MCF 10A (cell line): ENCODE measurements at regions of chr7 and their contacts with region 1.

Region 1: DNA sequence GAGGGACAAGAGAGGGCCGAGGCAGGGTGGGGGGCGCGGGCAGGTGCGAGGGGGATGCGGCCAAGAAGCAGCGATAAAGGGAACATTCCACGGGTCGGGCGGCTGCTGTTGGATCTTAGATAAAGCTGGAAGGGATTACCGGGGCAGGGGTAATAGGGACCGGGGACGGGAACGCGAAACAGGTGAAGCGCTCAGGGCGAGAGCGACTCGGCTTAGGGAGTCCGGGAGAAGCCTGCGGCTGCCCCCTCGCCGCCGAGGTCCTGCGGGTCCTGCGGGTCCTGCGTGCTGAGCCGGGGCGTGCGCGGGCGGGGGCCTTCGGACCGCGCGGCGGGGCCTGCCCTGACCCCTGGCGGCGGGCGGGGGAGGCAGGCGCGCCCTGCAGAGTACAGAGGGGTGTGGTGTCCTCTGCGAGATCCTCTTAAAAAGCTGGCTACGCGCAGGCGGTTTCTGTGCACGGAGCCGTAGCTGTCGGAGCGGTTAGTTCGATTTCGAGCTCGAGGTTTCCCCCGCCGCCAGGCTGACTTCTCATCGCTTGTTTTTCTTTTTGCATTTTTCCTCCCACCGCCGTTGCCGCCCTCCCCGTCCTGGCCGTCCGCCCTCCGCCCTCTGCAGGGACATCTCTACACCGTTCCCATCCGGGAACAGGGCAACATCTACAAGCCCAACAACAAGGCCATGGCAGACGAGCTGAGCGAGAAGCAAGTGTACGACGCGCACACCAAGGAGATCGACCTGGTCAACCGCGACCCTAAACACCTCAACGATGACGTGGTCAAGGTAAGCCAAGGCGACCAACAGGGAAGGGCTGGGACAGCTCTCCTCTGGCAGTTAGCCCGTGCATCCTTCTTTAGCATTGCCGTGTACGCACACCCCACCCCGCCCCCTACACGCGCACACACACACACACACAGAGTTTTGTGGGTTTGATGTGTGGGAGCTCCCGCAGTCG is 1.4 kb downstream of the CAV1 start:
- DNase-seq: peak; percentile 85
- H3K4me3 Mint-ChIP-seq: peak overlapping the region; percentile 99
- H3K27ac Mint-ChIP-seq: peak overlapping the region; percentile 90
- H3K4me1 Mint-ChIP-seq: peaks cover 39% of the 10 kb centered on the region
- H3K27me3 Mint-ChIP-seq: no peaks in the 10 kb centered on the region
- CTCF ChIP-seq: peak; percentile 81

Region 2: DNA sequence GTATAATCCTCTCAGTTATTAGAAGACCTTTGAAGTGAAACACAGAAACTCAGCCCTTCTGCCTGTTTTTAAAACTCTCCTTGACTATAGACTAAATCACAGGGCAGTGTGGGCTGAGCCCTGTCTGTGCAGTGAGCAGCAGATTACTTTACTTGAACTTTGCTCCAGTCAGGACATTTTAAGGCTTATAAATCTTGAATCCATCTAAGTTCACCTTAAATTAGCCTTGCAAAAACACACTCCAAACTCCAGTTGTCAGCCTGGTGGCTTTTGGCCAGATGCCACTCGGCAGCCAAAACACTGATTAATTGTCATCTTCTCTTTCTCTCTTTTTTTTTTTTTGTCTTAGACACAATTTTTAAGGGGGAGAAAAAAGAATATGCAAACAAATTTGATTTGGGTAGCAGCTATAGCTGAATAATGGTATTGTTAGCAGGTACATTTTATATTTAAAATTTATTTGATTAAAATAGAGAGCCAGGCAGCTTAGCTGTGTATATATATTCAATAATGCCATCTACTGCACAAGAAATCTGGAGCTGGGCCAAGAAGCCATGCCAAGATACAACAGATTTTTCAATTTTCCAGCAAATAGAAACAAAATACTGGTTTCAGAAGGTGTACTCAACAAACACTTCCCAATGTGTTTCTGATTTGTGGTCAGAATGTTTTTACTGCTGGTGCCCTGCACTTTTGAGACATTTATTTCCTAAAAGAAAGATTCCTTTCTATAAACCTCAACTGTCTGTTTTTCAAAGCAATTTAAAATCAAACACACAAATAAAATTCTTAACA is 743.3 kb before region 1 on chr7:
- CTCF ChIA-PET with region 1: no interaction called
- POLR2A ChIA-PET with region 1: no interaction called
- intact Hi-C with region 1: no loop called
- DNase-seq: no peak
- H3K4me3 Mint-ChIP-seq: no peak overlapping the region
- H3K27ac Mint-ChIP-seq: no peak overlapping the region
- H3K4me1 Mint-ChIP-seq: no peaks in the 10 kb centered on the region
- H3K27me3 Mint-ChIP-seq: peaks cover 74% of the 10 kb centered on the region
- CTCF ChIP-seq: no peak

Region 3: DNA sequence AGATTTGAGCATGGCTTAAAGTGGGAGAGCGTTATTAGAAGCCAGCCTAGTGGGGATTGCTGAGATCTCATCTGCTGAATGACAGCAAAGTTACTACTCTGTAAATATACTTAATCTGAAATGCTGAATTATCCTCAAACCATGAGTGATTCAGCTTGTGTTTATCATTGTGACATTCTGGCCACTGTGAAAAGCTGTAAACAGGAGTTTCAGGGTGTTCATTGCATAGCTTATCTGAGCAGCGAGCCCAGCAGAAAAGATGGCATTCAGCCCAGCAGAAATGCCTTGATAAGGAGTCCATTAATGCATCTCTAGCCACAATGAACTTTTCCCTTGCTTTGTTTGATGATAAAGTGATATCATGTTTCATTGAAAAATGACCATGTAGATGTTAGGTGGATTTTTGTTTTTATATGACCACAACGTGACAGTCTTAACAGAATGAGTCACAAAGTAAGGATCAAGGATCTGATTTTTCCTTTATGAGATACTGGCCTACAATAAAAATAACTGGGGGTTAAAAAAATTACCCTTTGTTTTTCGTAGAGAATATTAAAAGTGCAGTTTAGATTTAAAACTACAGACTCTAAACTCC is 308.0 kb before region 1 on chr7:
- CTCF ChIA-PET with region 1: interaction called, 3 read pairs
- POLR2A ChIA-PET with region 1: interaction called, 54 read pairs
- intact Hi-C with region 1: no loop called
- DNase-seq: peak; percentile 62
- H3K4me3 Mint-ChIP-seq: no peak overlapping the region
- H3K27ac Mint-ChIP-seq: peak overlapping the region; percentile 81
- H3K4me1 Mint-ChIP-seq: peaks cover 37% of the 10 kb centered on the region
- H3K27me3 Mint-ChIP-seq: no peaks in the 10 kb centered on the region
- CTCF ChIP-seq: no peak

Region 4: DNA sequence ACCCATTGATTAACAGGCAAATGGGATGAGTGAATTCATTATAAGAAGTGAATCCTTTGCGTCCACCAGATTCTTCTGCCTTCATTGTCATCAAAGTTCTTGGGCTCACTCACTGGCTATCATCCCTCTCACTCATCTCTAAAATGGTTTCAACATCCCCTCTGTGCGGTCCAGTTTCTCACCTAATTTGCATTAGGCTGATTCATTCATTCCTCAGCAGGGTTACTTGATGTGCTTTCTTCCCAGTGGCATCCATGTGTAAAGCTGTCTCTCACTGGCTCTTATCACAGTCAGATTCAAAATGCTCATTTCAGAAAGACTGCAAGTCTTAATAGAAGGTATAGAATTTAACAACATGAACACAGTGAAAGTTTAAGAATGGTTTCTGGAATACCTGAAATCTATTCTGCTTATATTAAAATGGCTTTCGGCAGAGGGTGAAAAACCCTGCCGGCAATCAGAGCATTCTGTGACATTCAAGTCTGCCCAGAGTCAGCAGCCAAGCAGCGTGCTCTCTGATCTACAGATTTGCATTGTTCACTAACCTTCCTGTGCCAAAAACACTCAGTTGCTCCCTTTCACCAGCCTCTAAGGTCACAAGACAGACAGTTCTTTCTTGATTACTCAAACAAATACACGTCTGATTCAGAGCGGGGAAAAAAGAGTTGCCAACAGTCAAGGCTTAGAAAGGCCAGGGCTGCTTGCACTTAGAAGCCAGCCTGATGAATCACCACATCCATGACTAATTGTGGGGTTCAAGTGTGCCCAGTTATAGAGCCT is 209.2 kb before region 1 on chr7:
- CTCF ChIA-PET with region 1: interaction called, 6 read pairs
- POLR2A ChIA-PET with region 1: interaction called, 25 read pairs
- intact Hi-C with region 1: loop called (anchors 1 kb)
- DNase-seq: peak; percentile 99
- H3K4me3 Mint-ChIP-seq: peak overlapping the region; percentile 42
- H3K27ac Mint-ChIP-seq: peak overlapping the region; percentile 88
- H3K4me1 Mint-ChIP-seq: peaks cover 17% of the 10 kb centered on the region
- H3K27me3 Mint-ChIP-seq: no peaks in the 10 kb centered on the region
- CTCF ChIP-seq: no peak

Region 5: GRCh38 chr7:116380025-116380424 is 146.2 kb before region 1 on chr7:
- CTCF ChIA-PET with region 1: no interaction called
- POLR2A ChIA-PET with region 1: no interaction called
- intact Hi-C with region 1: no loop called
- DNase-seq: no peak
- H3K4me3 Mint-ChIP-seq: no peak overlapping the region
- H3K27ac Mint-ChIP-seq: no peak overlapping the region
- H3K4me1 Mint-ChIP-seq: peaks cover under 1% of the 10 kb centered on the region
- H3K27me3 Mint-ChIP-seq: no peaks in the 10 kb centered on the region
- CTCF ChIP-seq: no peak

Region 6: GRCh38 chr7:116454377-116454776 is 71.8 kb before region 1 on chr7:
- CTCF ChIA-PET with region 1: no interaction called
- POLR2A ChIA-PET with region 1: no interaction called
- intact Hi-C with region 1: no loop called
- DNase-seq: no peak
- H3K4me3 Mint-ChIP-seq: no peak overlapping the region
- H3K27ac Mint-ChIP-seq: no peak overlapping the region
- H3K4me1 Mint-ChIP-seq: peaks cover 14% of the 10 kb centered on the region
- H3K27me3 Mint-ChIP-seq: no peaks in the 10 kb centered on the region
- CTCF ChIP-seq: no peak

Region 7: GRCh38 chr7:116499168-116500077 is 26.8 kb before region 1 on chr7 and contains the start of gene CAV2:
- CTCF ChIA-PET with region 1: interaction called, 37 read pairs
- POLR2A ChIA-PET with region 1: interaction called, 241 read pairs
- intact Hi-C with region 1: loop called (anchors 1 kb)
- DNase-seq: peak; percentile 86
- H3K4me3 Mint-ChIP-seq: peak within 1 kb of the TSS; percentile 87
- H3K27ac Mint-ChIP-seq: peak within 1 kb of the TSS; percentile 90
- H3K4me1 Mint-ChIP-seq: peaks cover 32% of the 10 kb centered on the region
- H3K27me3 Mint-ChIP-seq: no peaks in the 10 kb centered on the region
- CTCF ChIP-seq: no peak
- total RNA-seq, gene CAV2: 155 and 171 TPM in 2 replicates

Region 8: GRCh38 chr7:116576350-116577319 is 50.4 kb after region 1 on chr7:
- CTCF ChIA-PET with region 1: interaction called, 14 read pairs
- POLR2A ChIA-PET with region 1: interaction called, 109 read pairs
- intact Hi-C with region 1: loop called (anchors 5 kb)
- DNase-seq: peak; percentile 70
- H3K4me3 Mint-ChIP-seq: no peak overlapping the region
- H3K27ac Mint-ChIP-seq: peak overlapping the region; percentile 51
- H3K4me1 Mint-ChIP-seq: peaks cover 34% of the 10 kb centered on the region
- H3K27me3 Mint-ChIP-seq: no peaks in the 10 kb centered on the region
- CTCF ChIP-seq: no peak

Region 9: GRCh38 chr7:116671681-116672595 is 145.8 kb after region 1 on chr7 and contains the start of gene MET:
- CTCF ChIA-PET with region 1: interaction called, 5 read pairs
- POLR2A ChIA-PET with region 1: interaction called, 19 read pairs
- intact Hi-C with region 1: no loop called
- DNase-seq: peak; percentile 93
- H3K4me3 Mint-ChIP-seq: peak within 1 kb of the TSS; percentile 83
- H3K27ac Mint-ChIP-seq: peak within 1 kb of the TSS; percentile 98
- H3K4me1 Mint-ChIP-seq: peaks cover 19% of the 10 kb centered on the region
- H3K27me3 Mint-ChIP-seq: no peaks in the 10 kb centered on the region
- CTCF ChIP-seq: peak; percentile 64
- total RNA-seq, gene MET: 129 and 154 TPM in 2 replicates

Region 10: DNA sequence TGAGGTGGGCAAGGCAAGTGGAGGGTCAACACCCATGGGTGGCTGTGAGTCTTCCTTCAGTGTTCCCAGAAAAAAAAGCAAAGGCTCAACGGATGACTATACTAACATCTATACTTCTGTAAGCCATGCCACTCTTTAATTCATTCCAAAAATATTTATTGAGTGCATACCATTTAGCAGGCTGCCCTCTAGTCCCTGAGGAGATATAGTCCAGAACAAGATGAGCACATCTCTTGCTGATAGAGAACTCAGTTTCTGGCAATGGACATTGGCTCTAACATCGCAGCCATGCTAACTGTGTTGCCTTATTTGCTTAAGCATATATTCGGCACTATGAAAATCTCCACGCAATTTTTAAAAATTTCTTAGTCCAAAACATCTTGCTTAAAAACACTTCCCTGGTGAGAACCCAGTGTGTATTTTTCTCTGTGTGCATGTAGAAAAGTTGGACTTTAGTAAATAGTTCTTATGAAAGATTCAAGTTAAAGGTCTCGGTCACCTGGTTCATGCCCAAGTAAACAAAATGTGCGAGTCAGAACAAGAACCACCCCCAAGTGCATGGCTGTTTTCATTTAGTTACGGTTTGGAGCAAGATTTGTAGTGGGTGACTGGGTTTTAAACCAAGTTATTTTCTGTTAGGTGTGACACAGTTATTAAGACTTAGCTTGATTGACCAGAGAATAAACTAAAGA is 215.6 kb after region 1 on chr7:
- CTCF ChIA-PET with region 1: no interaction called
- POLR2A ChIA-PET with region 1: no interaction called
- intact Hi-C with region 1: no loop called
- DNase-seq: peak; percentile 20
- H3K4me3 Mint-ChIP-seq: no peak overlapping the region
- H3K27ac Mint-ChIP-seq: no peak overlapping the region
- H3K4me1 Mint-ChIP-seq: peaks cover 6% of the 10 kb centered on the region
- H3K27me3 Mint-ChIP-seq: no peaks in the 10 kb centered on the region
- CTCF ChIP-seq: no peak